ENCODE measurements at regions of chr1 and their contacts with region 1.

Region 1: DNA sequence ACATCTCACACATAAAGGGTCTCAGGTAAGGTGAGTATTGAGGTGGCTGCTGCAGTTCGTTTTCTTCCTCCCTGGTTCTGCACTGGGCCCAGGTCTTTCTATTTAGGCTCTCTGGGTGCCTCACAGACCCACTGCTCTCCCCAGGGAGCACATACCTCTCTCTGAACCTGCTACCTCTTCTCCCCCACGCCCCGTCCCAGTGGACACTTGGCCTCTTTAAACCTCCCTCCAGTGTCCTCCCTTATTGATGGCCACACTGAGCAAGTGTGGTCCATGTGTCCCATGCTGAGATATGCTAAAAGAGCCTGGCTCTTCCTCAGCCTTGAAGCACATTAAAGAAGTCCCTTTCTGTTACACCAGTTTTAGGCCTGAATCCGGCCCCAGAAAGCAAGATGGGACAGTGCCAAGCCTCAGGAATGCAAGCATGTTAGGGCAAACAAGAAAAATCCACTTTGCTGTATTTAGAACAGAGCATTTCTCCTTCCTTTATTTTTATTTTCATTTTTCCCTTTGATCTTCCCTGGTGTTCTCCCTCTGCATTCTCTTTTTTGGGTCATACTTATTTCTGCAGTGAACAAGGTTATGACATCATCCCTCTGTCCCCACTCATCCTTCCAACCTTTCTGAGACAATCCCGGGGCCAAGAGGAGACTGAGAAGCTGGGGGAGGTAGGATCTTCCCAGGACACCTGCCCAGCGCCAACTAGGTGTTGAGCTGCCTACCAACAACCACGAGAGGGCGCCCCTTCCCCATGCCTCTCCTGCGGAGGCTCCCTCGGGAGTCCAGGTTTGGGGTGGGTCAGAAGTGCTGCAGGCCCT is 5.0 kb upstream of the CHI3L2 start:
- DNase-seq: peak; percentile 85
- ATAC-seq: peak; percentile 46
- H3K4me3 Mint-ChIP-seq: peak overlapping the region; percentile 67
- H3K27ac Mint-ChIP-seq: peak overlapping the region; percentile 89
- H3K4me1 Mint-ChIP-seq: peaks cover 86% of the 10 kb centered on the region
- H3K27me3 Mint-ChIP-seq: no peaks in the 10 kb centered on the region

Region 2: GRCh38 chr1:111139956-111140679 is 82.4 kb before region 1 on chr1 and contains the starts of genes CEPT1 and DRAM2:
- CTCF ChIA-PET with region 1: interaction called, 10 read pairs
- DNase-seq: peak; percentile 98
- ATAC-seq: peak; percentile 84
- H3K4me3 Mint-ChIP-seq: peak within 1 kb of the TSS; percentile 93
- H3K27ac Mint-ChIP-seq: peak within 1 kb of the TSS; percentile 97
- H3K4me1 Mint-ChIP-seq: peaks cover 45% of the 10 kb centered on the region
- H3K27me3 Mint-ChIP-seq: no peaks in the 10 kb centered on the region
- total RNA-seq, gene CEPT1: 33.4 to 36.4 TPM
- total RNA-seq, gene DRAM2: 26.9 to 29.6 TPM

Region 3: GRCh38 chr1:111203681-111204200 is 18.8 kb before region 1 on chr1:
- CTCF ChIA-PET with region 1: interaction called, 392 read pairs
- DNase-seq: peak; percentile 94
- ATAC-seq: peak; percentile 32
- H3K4me3 Mint-ChIP-seq: peak overlapping the region; percentile 97
- H3K27ac Mint-ChIP-seq: peak overlapping the region; percentile 97
- H3K4me1 Mint-ChIP-seq: peaks cover 57% of the 10 kb centered on the region
- H3K27me3 Mint-ChIP-seq: no peaks in the 10 kb centered on the region

Region 4: DNA sequence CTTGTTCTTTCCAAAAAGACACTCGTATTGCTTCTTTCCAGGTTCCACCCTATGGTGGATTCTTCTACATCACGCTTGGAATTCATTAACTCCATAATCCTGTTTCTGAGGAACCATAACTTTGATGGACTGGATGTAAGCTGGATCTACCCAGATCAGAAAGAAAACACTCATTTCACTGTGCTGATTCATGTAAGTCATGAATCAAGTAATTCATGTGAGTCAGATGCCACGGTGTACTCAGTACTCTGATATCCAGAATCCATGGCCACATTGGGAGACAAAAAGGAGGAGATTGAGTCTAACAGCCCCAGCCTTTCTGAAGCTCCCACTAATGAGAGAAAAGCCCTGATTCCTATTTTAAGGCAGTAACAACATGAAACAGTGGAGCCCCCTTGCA is 12.3 kb after region 1 on chr1:
- CTCF ChIA-PET with region 1: interaction called, 11 read pairs
- DNase-seq: no peak
- ATAC-seq: no peak
- H3K4me3 Mint-ChIP-seq: no peak overlapping the region
- H3K27ac Mint-ChIP-seq: no peak overlapping the region
- H3K4me1 Mint-ChIP-seq: peaks cover 8% of the 10 kb centered on the region
- H3K27me3 Mint-ChIP-seq: no peaks in the 10 kb centered on the region

Region 5: DNA sequence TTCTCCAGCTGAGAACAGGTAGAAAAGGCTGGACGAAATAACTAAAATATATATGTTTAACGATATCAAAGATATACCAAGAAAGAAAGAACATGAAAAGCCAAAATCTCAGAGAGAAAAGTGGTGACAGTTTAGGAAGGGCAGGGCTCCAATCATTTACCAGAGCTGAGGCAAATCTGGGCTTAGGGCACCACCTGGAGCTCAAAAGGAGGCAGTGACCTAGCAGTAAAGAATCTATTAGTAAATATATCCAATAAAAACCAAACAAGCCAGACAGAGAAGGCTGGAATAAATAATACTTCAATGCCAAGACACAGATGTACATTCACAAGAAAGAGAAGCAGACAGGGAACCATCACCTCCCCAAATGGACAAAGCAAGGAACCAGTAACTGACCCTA is 111.7 kb after region 1 on chr1:
- CTCF ChIA-PET with region 1: interaction called, 27 read pairs
- DNase-seq: peak; percentile 62
- ATAC-seq: peak; percentile 68
- H3K4me3 Mint-ChIP-seq: no peak overlapping the region
- H3K27ac Mint-ChIP-seq: no peak overlapping the region
- H3K4me1 Mint-ChIP-seq: peaks cover 12% of the 10 kb centered on the region
- H3K27me3 Mint-ChIP-seq: no peaks in the 10 kb centered on the region

Region 6: DNA sequence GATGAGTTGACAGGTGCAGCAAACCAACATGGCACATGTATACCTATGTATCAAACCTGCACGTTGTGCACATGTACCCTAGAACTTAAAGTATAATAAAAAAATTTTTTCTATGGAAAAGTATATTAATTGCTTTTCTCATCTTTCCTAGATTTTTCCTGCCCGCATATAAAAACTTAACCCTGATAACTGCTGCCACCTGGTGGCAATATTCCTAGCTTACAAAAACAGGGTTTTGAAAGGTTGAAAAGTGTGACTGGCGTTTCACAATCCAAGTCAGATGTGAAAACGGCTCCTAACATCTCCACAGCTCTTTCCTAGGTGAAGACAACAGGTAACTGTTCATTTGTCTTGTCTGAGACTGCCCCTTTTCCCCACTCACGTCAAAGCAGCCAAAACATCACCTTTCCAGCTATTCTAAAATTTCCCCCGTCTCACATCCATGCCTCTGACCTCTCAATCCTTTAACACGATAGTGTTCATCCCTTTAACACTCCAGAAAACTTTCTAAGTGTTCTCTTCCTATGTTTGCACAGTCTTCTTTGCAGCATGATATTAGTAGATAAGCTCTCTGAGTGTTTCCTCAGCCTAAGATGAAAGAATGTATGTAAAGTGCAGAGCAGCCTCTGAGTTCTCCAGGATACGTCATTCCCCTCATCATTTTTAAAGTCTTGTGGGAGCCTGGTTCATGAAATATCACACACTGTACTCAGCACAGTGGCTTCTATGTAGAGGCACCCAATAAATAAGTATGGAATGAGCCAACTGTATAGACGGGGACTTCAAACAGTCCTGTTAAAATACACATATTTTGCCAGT is 177.5 kb after region 1 on chr1:
- CTCF ChIA-PET with region 1: interaction called, 62 read pairs
- DNase-seq: peak; percentile 56
- ATAC-seq: no peak
- H3K4me3 Mint-ChIP-seq: no peak overlapping the region
- H3K27ac Mint-ChIP-seq: no peak overlapping the region
- H3K4me1 Mint-ChIP-seq: peaks cover 8% of the 10 kb centered on the region
- H3K27me3 Mint-ChIP-seq: peaks cover 58% of the 10 kb centered on the region